ENCODE measurements at regions of chr9 and their contacts with region 1.

Region 1: GRCh38 chr9:128034821-128035764 is 32.0 kb downstream of the NAIF1 start:
- DNase-seq: peak; percentile 72 to 80 (median 79)
- ATAC-seq: peak; percentile 96
- H3K4me3 ChIP-seq: no peak overlapping the region
- H3K4me1 ChIP-seq: peaks cover 19% of the 10 kb centered on the region
- CTCF ChIP-seq: peak; percentile 76

Region 2: GRCh38 chr9:127943731-127944144 is 91.4 kb before region 1 on chr9:
- intact Hi-C with region 1: loop called (anchors 2 to 5 kb)
- DNase-seq: peak; percentile 89 to 91 (median 89)
- ATAC-seq: peak; percentile 85
- H3K4me3 ChIP-seq: no peak overlapping the region
- H3K4me1 ChIP-seq: peaks cover 3% of the 10 kb centered on the region
- CTCF ChIP-seq: peak; percentile 92

Region 3: DNA sequence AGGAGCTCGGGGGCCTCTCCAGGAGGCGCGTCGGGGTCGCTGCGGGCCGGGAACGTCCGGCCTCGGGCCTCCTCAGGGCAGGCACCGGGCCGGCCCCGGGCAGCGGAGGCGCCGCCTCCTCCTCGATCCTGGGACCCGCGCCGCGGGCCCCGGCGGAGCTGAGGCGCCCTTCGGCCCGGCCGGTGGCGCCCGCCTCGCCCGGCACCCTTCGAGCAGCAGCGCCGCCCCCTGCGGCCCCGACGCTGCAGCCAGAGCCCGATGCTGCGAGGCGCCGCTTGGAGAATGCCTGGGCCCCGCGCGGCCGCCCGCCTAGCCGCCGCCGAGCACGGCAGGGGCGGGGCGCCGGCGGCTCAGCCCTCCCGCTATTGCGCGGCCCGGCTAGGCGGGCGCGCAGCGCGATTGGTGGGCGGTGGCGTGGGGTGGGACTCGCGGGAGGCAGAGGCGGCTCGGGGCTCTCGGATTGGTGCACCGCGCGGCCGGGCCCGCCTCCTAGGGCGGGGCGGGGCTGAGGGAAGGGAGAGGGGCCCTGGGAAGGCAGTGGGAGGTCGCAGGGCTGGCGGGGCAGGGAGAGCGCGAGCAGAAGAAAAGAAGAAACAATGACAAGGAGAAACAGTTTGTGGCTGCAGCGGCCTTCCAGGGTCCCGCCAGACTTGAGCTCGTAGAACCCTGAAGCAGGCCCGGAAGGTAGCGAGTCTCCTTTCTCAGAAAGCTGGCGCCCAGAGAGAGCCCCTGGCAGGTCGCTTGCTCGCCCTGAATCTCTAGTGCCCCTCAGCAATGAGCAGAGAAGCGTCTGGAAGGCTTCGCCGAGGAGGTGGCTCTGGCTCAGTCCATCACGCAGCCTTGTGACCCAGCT is 54.2 kb before region 1 on chr9 and contains the start of gene EEIG1:
- intact Hi-C with region 1: loop called in 1 of 2 experiments (anchors 10 kb)
- DNase-seq: peak; percentile 95 to 99 (median 97)
- ATAC-seq: peak; percentile 79
- H3K4me3 ChIP-seq: peak within 1 kb of the TSS; percentile 84
- H3K4me1 ChIP-seq: peaks cover 38% of the 10 kb centered on the region
- CTCF ChIP-seq: no peak
- total RNA-seq, gene EEIG1: 127 to 168 (median 144) TPM

Measured in mucosa of descending colon (tissue), 3 donors.